Right lobe of liver (tissue), 6 donors: ENCODE measurements at regions of chr15 and their contacts with region 1.

Region 1: DNA sequence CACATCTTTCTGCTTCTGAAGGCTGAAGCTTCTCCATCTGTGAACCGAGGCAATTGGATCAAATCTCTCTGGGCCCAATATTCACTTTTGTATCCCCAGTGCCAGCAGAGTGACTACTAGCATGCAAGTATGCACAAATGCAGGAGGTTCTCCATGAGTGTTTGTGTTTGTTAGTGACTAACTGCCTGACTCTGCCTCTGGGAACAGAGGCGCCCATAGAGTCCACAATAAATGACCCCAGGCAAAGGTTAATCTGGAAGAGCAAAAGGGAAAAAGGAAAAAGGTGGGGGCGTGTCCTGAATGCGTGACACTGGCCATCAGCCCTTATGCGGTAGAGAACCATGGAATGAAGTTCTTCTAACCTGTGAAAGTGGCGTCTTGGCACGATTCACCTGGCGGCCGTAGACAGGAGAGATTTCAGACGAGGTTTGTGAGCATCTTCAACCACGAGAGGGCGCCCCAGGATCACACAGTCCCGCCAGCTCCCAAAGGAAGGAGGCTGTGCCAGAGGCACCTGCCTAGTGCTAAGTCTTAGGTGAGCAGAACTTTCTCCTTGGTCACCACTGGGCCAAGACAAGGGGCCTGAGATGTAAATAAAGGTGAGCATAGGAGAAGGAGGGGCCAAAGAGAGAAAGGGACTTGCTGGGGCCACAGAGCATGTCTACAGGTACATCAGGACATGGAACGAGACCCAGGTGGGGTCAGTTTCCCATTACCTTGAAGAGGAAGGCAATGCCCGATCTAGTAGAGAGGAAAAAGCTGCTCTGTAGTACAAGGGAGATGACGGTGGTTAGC is 44.2 kb downstream of the RBPMS2 start:
- DNase-seq: peak; percentile 84 to 90 (median 90)
- ATAC-seq: peak; percentile 81 to 90 (median 86)
- H3K4me3 ChIP-seq: no peak overlapping the region
- H3K27ac ChIP-seq: peak overlapping the region in 1 of 3 donors; percentile 18
- H3K4me1 ChIP-seq: peaks cover 0 to 23% (median 8%) of the 10 kb centered on the region in 4 donors
- H3K27me3 ChIP-seq: no peaks in the 10 kb centered on the region
- CTCF ChIP-seq: peak; percentile 87 to 97 (median 88)
- POLR2A ChIP-seq: no peak

Region 2: DNA sequence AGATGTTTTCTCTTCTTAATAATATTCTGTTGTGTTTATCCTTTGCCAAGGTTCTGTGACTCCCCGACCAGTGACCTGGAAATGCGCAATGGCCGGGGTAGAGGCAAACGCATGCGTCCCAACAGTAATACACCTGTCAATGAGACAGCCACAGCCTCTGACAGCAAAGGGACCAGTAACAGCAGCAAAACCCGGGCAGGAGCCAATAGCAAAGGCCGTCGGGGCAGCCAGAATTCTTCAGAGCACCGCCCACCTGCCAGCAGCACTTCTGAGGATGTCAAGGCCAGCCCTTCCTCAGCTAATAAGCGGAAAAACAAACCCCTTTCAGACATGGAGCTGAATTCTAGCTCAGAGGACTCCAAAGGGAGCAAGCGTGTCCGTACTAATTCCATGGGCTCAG is 57.3 kb before region 1 on chr15:
- intact Hi-C with region 1: no loop called
- DNase-seq: no peak
- ATAC-seq: no peak
- H3K4me3 ChIP-seq: no peak overlapping the region
- H3K27ac ChIP-seq: no peak overlapping the region
- H3K4me1 ChIP-seq: no peaks in the 10 kb centered on the region
- H3K27me3 ChIP-seq: no peaks in the 10 kb centered on the region
- CTCF ChIP-seq: no peak
- POLR2A ChIP-seq: no peak

Region 3: DNA sequence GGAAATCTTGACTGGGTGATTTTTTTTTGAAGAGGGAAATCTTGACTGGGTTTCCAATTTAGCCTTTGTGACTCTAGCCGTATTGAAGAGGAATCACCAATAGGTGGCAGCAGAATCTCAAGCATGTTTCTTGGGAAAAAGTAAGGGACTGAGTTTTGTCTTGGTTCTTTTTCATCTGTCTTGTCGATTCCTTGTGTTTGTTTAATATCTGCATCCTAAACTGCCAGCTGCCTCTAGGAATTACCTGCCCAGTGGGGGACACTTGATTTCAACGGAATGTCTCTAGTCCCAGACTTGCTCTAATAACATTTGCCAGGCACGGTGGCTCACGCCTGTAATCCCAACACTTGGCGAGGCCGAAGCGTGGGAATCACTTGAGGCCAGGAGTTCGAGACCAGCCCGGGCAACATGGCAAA is 45.0 kb before region 1 on chr15:
- intact Hi-C with region 1: loop called (anchors 5 kb)
- DNase-seq: no peak
- ATAC-seq: peak in 3 of 4 donors; percentile 27 to 42 (median 40)
- H3K4me3 ChIP-seq: no peak overlapping the region
- H3K27ac ChIP-seq: no peak overlapping the region
- H3K4me1 ChIP-seq: peaks cover 0 to 9% (median 4%) of the 10 kb centered on the region in 4 donors
- H3K27me3 ChIP-seq: no peaks in the 10 kb centered on the region
- CTCF ChIP-seq: peak; percentile 64 to 73 (median 65)
- POLR2A ChIP-seq: no peak

Region 4: DNA sequence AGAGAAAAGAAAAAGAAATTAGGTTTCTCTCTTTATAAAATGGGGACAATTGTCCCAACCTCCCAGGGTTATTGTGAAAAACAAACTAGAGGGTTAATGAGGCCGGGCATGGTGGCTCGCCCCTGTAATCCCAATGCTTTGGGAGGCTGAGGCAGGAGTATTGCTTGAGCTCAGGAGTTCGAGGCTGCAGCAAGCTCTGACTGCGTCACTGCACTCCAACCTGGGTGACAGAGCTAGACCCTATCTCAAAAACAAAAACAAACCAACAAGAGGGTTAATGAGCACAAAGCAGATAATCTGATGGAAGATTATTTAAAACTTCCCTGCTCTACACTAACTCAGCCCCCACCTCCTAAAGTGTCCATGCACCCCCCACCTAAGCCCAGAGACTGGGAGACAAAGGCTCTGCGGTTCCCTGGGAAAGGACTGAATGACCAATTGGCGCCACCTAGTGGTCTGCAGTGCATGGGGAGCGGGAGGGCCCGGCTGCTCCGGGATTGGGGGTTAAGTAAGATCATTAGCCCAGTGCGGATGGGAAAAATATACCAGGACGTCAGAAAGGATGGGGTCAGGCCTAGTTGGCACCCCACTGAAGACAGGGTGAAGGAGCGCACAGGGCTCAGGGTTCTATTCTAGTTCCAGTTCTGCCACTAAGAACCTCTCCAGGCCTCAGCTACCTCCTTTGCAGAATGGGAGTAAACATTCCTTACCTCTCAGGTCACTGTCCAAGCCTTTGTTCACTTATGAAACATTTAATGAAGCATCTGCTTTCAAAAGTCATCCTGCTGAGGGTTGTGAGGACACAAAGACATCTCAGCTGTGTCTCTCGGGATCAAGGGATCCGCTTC is 78.7 kb after region 1 on chr15:
- intact Hi-C with region 1: loop called (anchors 5 kb)
- DNase-seq: peak; percentile 83 to 85 (median 84)
- ATAC-seq: peak; percentile 88 to 94 (median 92)
- H3K4me3 ChIP-seq: no peak overlapping the region
- H3K27ac ChIP-seq: no peak overlapping the region
- H3K4me1 ChIP-seq: peaks cover 0 to 7% (median 0%) of the 10 kb centered on the region in 4 donors
- H3K27me3 ChIP-seq: no peaks in the 10 kb centered on the region
- CTCF ChIP-seq: peak; percentile 87 to 92 (median 90)
- POLR2A ChIP-seq: no peak